A673 (cell line): ENCODE measurements at regions of chr7 and their contacts with region 1.

Region 1: DNA sequence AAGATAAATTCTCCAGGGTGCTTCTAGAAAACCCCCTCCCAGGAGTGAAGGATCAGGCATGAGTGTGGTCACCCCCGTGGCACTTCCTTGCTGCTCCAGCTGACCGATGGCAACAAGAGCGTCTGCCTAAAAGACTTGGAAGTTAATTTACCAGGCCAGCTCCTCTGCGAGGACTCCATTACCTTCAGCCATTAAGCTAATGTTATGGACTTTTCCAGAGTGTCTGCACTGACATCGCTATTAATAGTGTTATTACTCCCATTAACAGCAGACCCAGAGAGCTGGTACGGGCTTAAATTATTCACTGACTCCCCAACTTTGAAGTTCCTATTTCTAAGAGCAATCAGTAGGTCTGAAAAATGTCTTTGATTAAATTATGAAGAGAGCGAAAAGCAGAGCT is 345.8 kb downstream of the PLXNA4 start:
- DNase-seq: no peak
- H3K4me3 ChIP-seq: no peak overlapping the region
- H3K27ac ChIP-seq: no peak overlapping the region
- H3K4me1 ChIP-seq: no peaks in the 10 kb centered on the region
- H3K27me3 ChIP-seq: peaks cover 46% of the 10 kb centered on the region
- CTCF ChIP-seq: no peak

Region 2: GRCh38 chr7:132249614-132249972 is 19.1 kb after region 1 on chr7:
- CTCF ChIA-PET with region 1: no interaction called
- POLR2A ChIA-PET with region 1: interaction called, 18 read pairs
- intact Hi-C with region 1: no loop called
- DNase-seq: peak; percentile 10
- H3K4me3 ChIP-seq: no peak overlapping the region
- H3K27ac ChIP-seq: no peak overlapping the region
- H3K4me1 ChIP-seq: no peaks in the 10 kb centered on the region
- H3K27me3 ChIP-seq: peaks cover 40% of the 10 kb centered on the region
- CTCF ChIP-seq: no peak